Activated CD4-positive, alpha-beta T cell treated with anti-CD3 and anti-CD28 coated beads for 36 hours (primary cell): ENCODE measurements at regions of chr10 and their contacts with region 1.

Region 1: DNA sequence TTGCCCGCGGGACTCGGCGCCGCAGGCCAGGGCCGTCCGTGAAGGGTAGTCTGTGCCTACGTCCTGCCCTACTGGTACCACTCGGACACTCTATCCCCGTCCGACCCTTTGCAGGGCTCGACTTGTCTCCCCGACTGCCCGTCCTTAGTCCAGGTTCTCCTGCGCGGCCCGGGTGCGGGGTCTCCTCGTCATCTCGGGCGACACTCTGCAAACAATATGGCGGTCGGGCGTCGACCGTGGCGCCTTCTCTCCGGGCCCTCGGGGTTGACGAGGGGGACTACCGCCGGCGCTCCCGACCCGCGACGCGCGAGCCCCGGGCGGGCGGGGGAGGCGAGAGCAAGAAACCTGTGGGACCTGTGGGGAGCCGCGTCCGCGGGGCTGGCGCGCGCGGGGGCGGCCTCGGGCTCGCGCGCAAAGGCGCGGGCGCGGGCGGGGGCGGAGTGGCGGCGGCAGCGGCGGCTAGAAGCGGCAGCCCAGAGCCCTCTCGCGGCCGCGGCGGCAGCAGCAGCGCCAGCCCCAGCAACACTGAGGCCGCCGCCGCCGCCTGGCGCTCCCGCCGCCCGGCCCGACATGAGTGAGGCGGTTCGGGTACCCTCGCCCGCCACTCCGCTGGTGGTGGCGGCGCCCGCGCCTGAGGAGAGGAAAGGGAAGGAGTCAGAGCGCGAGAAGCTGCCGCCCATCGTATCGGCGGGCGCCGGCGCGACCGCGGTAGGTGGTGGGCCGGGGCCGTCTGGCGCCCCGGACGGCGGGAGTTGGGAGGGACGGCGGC is at the start of gene HECTD2:
- DNase-seq: peak; percentile 90
- ATAC-seq: peak; percentile 80
- H3K4me3 Mint-ChIP-seq: peak within 1 kb of the TSS; percentile 86
- H3K27ac Mint-ChIP-seq: peak within 1 kb of the TSS; percentile 97
- H3K4me1 Mint-ChIP-seq: peaks cover 21% of the 10 kb centered on the region
- H3K27me3 Mint-ChIP-seq: peaks cover 4% of the 10 kb centered on the region
- total RNA-seq, gene HECTD2: 3.5 to 9.7 TPM

Region 2: DNA sequence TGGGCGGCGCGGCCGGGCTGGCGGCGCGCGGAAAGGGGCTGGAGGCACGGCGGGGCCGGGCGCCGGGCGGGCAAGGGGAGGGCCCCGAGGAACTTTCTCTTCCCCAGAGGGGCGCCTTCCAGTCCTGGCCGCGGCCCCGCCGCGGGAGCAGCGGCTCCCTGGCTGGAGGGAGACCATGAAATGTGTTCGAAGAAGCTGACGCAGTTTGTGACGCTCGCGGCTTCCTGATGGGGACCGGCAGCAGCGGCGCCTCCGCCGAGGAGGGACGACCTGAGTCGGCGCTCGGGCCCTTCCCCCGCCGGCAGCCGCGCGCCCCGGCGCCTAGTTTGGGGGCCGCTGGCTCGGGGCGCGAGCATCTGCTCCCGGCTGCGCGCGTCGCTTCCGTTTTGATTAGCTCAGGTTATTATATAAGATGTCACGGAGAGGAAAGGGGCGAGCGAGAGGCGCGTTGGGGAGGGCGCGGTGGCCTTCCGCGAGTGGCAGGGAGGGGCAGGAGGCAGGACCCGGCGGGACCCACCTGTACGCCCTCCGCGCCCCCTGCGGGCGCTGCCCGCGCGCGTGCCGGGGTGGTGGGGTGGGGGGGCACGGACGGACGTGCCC is 246.7 kb before region 1 on chr10:
- CTCF ChIA-PET with region 1: no interaction called
- POLR2A ChIA-PET with region 1: no interaction called
- intact Hi-C with region 1: loop called in 1 of 2 experiments (anchors 2 kb)
- DNase-seq: peak; percentile 83
- ATAC-seq: peak; percentile 62
- H3K4me3 Mint-ChIP-seq: peak overlapping the region; percentile 81
- H3K27ac Mint-ChIP-seq: peak overlapping the region; percentile 91
- H3K4me1 Mint-ChIP-seq: peaks cover 34% of the 10 kb centered on the region
- H3K27me3 Mint-ChIP-seq: no peaks in the 10 kb centered on the region

Region 3: GRCh38 chr10:91198781-91199180 is 211.3 kb before region 1 on chr10:
- CTCF ChIA-PET with region 1: no interaction called
- POLR2A ChIA-PET with region 1: no interaction called
- intact Hi-C with region 1: loop called in 1 of 2 experiments (anchors 5 kb)
- DNase-seq: peak; percentile 19
- ATAC-seq: peak; percentile 30
- H3K4me3 Mint-ChIP-seq: no peak overlapping the region
- H3K27ac Mint-ChIP-seq: peak overlapping the region; percentile 82
- H3K4me1 Mint-ChIP-seq: peaks cover 82% of the 10 kb centered on the region
- H3K27me3 Mint-ChIP-seq: no peaks in the 10 kb centered on the region

Region 4: DNA sequence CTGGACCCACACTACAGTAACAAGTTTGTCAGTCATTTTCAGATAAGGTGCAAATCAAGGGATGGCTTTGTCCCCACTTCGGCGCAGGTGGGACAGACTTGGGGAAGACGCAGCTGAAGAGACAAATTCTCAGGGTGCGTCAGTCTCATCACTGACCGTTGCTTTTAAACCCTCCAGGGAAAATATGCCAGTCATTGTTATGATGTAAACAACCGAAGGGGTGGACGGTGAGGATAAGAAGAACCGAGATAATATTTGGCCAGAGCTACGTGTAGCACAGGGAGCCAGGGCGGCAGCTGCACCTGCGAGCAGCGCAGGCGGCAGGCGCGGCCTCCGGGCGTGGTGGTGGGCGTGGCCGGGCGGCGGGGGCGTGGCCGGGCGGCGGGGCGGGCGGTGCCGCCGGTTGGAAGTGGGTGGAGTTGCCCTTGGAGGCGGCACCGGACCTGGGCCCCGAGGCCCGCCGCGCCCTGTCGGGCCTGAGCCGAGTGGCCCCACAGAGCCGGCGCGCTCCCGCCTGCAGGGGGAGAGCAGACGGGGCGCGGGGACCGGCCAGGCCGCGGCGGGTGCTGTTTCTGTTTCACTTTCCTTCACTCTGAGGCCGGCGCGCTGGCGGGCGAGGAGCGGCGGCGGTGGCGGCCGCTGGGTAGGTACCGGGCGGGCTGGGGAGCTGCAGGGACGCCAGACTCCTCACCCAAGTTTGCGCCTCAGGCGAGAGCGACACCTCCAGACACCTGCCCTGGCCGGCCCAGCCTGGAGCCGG is 189.7 kb before region 1 on chr10 and contains the start of gene PCGF5:
- CTCF ChIA-PET with region 1: no interaction called
- POLR2A ChIA-PET with region 1: no interaction called
- intact Hi-C with region 1: loop called in 1 of 2 experiments (anchors 2 kb)
- DNase-seq: peak; percentile 94
- ATAC-seq: peak; percentile 99
- H3K4me3 Mint-ChIP-seq: peak within 1 kb of the TSS; percentile 84
- H3K27ac Mint-ChIP-seq: peak within 1 kb of the TSS; percentile 75
- H3K4me1 Mint-ChIP-seq: peaks cover 36% of the 10 kb centered on the region
- H3K27me3 Mint-ChIP-seq: no peaks in the 10 kb centered on the region
- total RNA-seq, gene PCGF5: 36.5 to 44.3 TPM

Region 5: GRCh38 chr10:91389636-91390512 is 20.2 kb before region 1 on chr10:
- CTCF ChIA-PET with region 1: interaction called, 6 read pairs
- POLR2A ChIA-PET with region 1: no interaction called
- intact Hi-C with region 1: loop called in 1 of 2 experiments (anchors 2 kb)
- DNase-seq: no peak
- ATAC-seq: peak; percentile 81
- H3K4me3 Mint-ChIP-seq: no peak overlapping the region
- H3K27ac Mint-ChIP-seq: no peak overlapping the region
- H3K4me1 Mint-ChIP-seq: peaks cover 6% of the 10 kb centered on the region
- H3K27me3 Mint-ChIP-seq: peaks cover 18% of the 10 kb centered on the region

Region 6: DNA sequence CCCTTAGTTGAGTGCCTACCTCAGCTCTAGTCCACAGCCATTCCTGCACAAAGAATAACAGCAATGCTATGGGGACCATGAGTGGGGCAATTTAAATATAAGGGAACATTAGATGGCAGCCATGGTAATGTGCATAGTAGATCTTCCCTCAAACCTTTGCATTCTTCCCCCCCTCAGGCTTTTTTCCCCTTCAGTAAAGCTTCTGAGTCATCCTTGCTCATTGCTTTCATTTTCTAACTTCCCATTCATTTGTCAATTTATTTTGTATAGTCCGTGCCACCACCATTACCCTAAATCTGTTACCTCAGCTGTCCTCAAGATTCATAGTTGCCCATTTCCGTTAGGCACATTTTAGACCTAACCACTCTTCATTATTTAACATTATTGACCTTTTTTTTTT is 10.8 kb after region 1 on chr10:
- CTCF ChIA-PET with region 1: interaction called, 9 read pairs
- POLR2A ChIA-PET with region 1: interaction called, 8 read pairs
- intact Hi-C with region 1: loop called in 1 of 2 experiments (anchors 1 kb)
- DNase-seq: no peak
- ATAC-seq: peak; percentile 32
- H3K4me3 Mint-ChIP-seq: no peak overlapping the region
- H3K27ac Mint-ChIP-seq: peak overlapping the region; percentile 4
- H3K4me1 Mint-ChIP-seq: peaks cover 22% of the 10 kb centered on the region
- H3K27me3 Mint-ChIP-seq: no peaks in the 10 kb centered on the region